Activated CD4-positive, alpha-beta memory T cell treated with anti-CD3 and anti-CD28 coated beads for 36 hours (primary cell): ENCODE measurements at regions of chr6 and their contacts with region 1.

Region 1: DNA sequence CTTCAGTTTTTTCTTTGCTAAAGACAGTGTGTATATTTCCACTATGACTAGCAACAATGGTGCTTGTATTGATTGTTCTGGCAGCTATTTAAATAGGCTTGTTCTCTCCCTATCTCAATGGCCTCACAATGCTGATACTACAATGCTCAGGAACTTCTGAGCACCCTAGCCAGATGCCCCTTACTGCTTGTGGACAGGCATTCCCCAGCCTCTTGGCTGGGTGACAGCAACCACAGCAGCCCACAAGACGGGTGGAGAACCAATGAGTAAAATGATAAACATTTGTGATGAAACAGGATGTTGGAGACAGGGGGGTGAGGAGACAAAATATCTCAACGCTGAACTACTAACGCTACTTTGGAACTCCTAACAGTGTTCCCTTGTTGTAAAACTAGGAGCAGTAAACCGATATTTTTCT is 42.3 kb downstream of the HIVEP2 start:
- DNase-seq: peak; percentile 87
- H3K4me3 Mint-ChIP-seq: peak overlapping the region; percentile 56
- H3K27ac Mint-ChIP-seq: peak overlapping the region; percentile 87
- H3K4me1 Mint-ChIP-seq: peaks cover 59% of the 10 kb centered on the region
- H3K27me3 Mint-ChIP-seq: no peaks in the 10 kb centered on the region

Region 2: GRCh38 chr6:142429195-142429594 is 473.4 kb before region 1 on chr6:
- CTCF ChIA-PET with region 1: no interaction called
- POLR2A ChIA-PET with region 1: no interaction called
- intact Hi-C with region 1: no loop called
- DNase-seq: no peak
- H3K4me3 Mint-ChIP-seq: no peak overlapping the region
- H3K27ac Mint-ChIP-seq: no peak overlapping the region
- H3K4me1 Mint-ChIP-seq: no peaks in the 10 kb centered on the region
- H3K27me3 Mint-ChIP-seq: no peaks in the 10 kb centered on the region

Region 3: DNA sequence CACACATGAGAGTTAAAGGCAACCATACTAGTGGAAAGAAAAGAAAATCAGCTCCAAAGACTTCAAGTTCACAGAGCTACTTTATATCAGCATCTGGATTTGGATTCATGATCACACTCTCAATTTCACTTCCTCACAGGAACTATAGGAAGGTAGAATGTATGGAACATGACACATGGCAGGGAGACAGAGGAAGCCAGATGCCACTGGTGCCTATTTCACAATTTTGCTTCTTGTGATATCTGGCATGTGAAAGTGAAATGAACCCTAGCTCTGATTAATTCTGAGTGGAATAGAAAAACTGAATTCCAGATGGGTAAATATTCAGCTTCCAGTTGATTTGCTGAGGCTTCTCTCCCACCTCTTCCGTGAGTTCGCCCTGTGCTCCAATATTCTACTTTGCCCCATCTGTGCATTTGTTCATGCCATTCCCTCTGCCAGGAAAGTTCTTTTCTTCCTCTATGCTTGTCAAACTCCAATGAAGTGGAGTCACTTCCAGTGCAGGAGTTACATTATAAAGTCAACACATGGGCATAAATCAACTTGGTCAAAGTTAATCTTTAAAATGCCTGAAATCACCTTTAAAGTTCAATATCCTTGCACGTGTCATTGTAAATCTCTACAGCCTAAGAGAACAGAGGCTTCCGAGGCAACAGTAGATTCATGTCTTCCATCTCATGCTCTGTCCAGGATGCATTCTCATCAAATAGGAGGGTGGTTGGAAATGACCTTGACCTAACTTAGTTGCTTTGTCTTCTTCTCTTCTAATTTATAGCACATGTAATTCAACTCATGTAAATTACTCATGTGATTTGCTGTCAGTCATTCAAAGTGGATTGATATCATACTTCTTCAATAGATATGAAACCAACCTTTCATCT is 232.9 kb before region 1 on chr6:
- CTCF ChIA-PET with region 1: no interaction called
- POLR2A ChIA-PET with region 1: no interaction called
- intact Hi-C with region 1: no loop called
- DNase-seq: no peak
- H3K4me3 Mint-ChIP-seq: no peak overlapping the region
- H3K27ac Mint-ChIP-seq: no peak overlapping the region
- H3K4me1 Mint-ChIP-seq: peaks cover 5% of the 10 kb centered on the region
- H3K27me3 Mint-ChIP-seq: peaks cover 2% of the 10 kb centered on the region

Region 4: GRCh38 chr6:142926494-142927270 is 24.0 kb after region 1 on chr6:
- CTCF ChIA-PET with region 1: interaction called, 4 read pairs
- POLR2A ChIA-PET with region 1: interaction called, 12 read pairs
- intact Hi-C with region 1: loop called (anchors 1 kb)
- DNase-seq: peak; percentile 83
- H3K4me3 Mint-ChIP-seq: peak overlapping the region; percentile 83
- H3K27ac Mint-ChIP-seq: peak overlapping the region; percentile 91
- H3K4me1 Mint-ChIP-seq: peaks cover 55% of the 10 kb centered on the region
- H3K27me3 Mint-ChIP-seq: no peaks in the 10 kb centered on the region

Region 5: DNA sequence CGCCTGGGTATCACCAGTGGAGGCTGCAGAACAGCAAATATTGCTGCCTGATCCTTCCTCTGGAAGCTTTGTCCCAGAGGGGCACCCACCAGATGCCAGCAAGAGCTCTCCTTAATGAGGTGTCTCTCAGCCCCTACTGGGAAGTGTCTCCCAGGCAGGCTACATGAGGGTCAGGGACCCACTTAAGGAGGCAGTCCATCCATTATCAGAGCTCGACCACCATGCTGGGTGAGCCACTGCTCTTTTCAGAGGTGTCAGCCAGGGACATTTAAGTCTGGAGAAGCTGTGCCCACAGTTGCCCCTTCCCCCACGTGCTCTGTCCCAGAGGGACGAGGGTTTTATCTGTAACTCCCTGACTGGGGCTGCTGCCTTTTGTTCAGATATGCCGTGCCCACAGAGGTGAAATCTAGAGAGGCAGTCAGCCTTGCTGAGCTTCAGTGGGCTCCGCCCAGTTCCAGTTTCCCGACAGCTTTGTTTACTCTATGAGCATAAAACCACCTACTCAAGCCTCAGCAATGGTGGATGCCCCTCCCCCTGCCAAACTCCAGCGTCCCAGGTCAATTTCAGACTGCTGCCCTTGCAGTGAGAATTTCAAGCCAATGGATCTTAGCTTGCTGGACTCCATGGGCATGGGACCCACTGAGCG is 132.2 kb after region 1 on chr6:
- CTCF ChIA-PET with region 1: no interaction called
- POLR2A ChIA-PET with region 1: no interaction called
- intact Hi-C with region 1: no loop called
- DNase-seq: peak; percentile 21
- H3K4me3 Mint-ChIP-seq: no peak overlapping the region
- H3K27ac Mint-ChIP-seq: no peak overlapping the region
- H3K4me1 Mint-ChIP-seq: peaks cover 4% of the 10 kb centered on the region
- H3K27me3 Mint-ChIP-seq: peaks cover 12% of the 10 kb centered on the region

Region 6: GRCh38 chr6:143060354-143060805 is 157.7 kb after region 1 on chr6:
- CTCF ChIA-PET with region 1: no interaction called
- POLR2A ChIA-PET with region 1: no interaction called
- intact Hi-C with region 1: loop called (anchors 5 kb)
- DNase-seq: peak; percentile 83
- H3K4me3 Mint-ChIP-seq: peak overlapping the region; percentile 89
- H3K27ac Mint-ChIP-seq: peak overlapping the region; percentile 92
- H3K4me1 Mint-ChIP-seq: peaks cover 23% of the 10 kb centered on the region
- H3K27me3 Mint-ChIP-seq: no peaks in the 10 kb centered on the region

Region 7: DNA sequence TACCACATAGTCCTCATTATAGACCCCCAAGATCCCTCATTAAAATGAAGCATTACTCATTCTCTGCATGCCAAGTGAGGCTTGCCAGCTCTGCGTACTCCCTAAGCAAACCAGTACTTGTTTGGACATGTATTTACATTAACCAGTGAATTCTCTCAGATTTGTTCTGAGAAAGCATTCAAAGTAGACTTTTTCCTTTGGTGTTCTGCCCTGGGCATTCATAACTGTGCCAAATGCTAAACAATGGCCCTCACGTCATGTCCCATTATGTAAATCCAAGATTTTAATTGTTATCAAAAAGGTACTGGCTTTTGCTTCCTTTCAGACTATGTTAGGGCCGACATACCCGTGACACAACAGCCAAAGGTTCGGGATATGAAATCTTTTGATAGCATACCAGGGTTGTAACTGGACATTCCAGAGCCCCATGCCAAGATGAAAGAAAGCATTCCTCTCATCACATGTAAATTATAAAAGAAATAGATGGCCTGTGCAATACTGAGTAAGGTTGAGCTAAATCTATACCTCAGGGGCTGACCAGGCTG is 383.7 kb after region 1 on chr6:
- CTCF ChIA-PET with region 1: no interaction called
- POLR2A ChIA-PET with region 1: no interaction called
- intact Hi-C with region 1: no loop called
- DNase-seq: no peak
- H3K4me3 Mint-ChIP-seq: no peak overlapping the region
- H3K27ac Mint-ChIP-seq: no peak overlapping the region
- H3K4me1 Mint-ChIP-seq: no peaks in the 10 kb centered on the region
- H3K27me3 Mint-ChIP-seq: no peaks in the 10 kb centered on the region